ENCODE measurements at regions of chr1 and their contacts with region 1.

Region 1: DNA sequence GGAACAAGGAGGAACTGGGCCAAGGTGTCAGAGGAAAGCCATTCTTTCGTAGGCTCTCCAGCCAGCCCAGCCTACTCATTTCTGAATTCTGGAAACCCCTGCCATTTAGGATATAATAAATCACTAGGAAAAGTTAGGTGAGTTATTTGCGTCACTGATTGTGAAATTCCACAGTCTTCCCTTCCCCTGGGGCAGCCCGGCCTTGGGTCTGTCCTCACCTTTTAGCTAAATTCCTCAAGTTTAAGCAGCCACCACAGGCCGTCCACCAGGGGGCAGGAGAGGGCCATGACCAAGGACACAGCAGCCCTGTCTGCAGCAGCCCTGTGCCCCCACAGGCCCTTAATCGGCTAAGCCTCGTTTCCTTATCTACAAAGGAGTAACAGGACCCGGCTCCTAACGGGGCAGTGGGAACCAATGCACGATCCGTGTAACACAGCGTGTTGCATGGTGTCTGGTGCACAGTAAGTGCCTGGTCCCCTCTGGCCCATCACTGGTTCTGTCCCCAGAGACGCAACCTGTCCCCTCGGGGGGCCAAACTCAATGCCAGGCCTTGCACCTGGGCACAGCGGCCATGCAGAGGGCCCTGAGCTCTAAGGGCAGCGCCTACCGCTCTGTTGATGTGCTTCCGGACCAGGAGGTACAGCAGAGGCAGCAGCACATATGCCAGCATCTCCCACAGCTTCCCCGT is 18.1 kb downstream of the GPR157 start:
- DNase-seq: peak; percentile 91
- H3K4me3 ChIP-seq: no peak overlapping the region
- H3K27ac ChIP-seq: peak overlapping the region; percentile 16; the same call in 1 of the 2 replicates
- H3K4me1 ChIP-seq: peaks cover 8% of the 10 kb centered on the region
- H3K27me3 ChIP-seq: no peaks in the 10 kb centered on the region
- CTCF ChIP-seq: peak; percentile 90

Region 2: GRCh38 chr1:8422510-8423301 is 688.1 kb before region 1 on chr1:
- CTCF ChIA-PET with region 1: no interaction called
- POLR2A ChIA-PET with region 1: no interaction called
- intact Hi-C with region 1: no loop called
- DNase-seq: no peak
- H3K4me3 ChIP-seq: peak overlapping the region; percentile 70
- H3K27ac ChIP-seq: peak overlapping the region; percentile 65
- H3K4me1 ChIP-seq: peaks cover 36% of the 10 kb centered on the region
- H3K27me3 ChIP-seq: no peaks in the 10 kb centered on the region
- CTCF ChIP-seq: no peak

Region 3: GRCh38 chr1:9069326-9070100 is 41.3 kb before region 1 on chr1 and contains the start of gene SLC2A5:
- CTCF ChIA-PET with region 1: no interaction called
- POLR2A ChIA-PET with region 1: no interaction called
- intact Hi-C with region 1: no loop called
- DNase-seq: no peak
- H3K4me3 ChIP-seq: no peak within 1 kb of the TSS
- H3K27ac ChIP-seq: no peak within 1 kb of the TSS
- H3K4me1 ChIP-seq: no peaks in the 10 kb centered on the region
- H3K27me3 ChIP-seq: no peaks in the 10 kb centered on the region
- CTCF ChIP-seq: no peak
- total RNA-seq, gene SLC2A5: not detected in 2 replicates

Region 4: DNA sequence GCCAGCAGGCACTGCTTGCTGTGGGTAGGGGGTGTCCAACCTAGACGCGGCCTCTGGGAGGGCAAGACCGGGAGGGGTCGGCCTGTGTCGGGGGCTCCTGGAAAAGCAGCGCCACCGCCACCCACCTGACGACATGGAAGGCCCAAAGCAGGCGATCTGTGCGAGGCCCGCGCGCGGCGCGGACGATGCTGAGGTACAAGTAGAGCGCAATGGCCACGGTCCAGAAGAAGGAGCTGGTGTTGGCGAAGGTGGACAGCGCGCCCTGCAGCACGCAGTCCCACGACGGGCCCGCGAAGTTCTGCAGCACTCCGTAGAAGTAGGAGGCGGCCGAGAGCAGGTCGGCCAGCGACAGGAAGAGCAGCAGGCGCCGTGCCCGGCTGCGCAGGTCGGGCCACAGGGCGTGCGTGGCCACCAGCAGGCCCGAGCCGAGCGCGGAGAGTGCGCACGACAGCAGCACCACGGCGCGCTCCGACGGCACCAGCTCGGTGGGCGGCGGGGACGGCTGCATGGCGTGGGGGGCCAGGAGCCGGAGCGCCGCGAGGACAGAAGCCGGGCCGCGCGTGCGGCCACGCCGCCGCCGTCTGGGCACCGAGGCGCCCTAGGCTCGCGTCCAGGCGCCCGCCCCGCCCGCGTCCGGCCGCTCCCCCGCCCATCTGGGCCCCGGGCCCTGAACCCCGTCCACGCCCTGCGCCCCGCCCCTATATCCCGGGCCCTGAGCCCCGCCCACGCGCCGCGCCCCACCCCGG is 17.9 kb after region 1 on chr1 and contains the start of gene GPR157:
- CTCF ChIA-PET with region 1: interaction called, 18 read pairs
- POLR2A ChIA-PET with region 1: no interaction called
- intact Hi-C with region 1: no loop called
- DNase-seq: peak; percentile 52 to 78
- H3K4me3 ChIP-seq: peak within 1 kb of the TSS; percentile 70
- H3K27ac ChIP-seq: peak within 1 kb of the TSS; percentile 44; the same call in 1 of the 2 replicates
- H3K4me1 ChIP-seq: peaks cover 33% of the 10 kb centered on the region
- H3K27me3 ChIP-seq: no peaks in the 10 kb centered on the region
- CTCF ChIP-seq: no peak
- total RNA-seq, gene GPR157: 9.0 and 10.6 TPM in 2 replicates

Region 5: DNA sequence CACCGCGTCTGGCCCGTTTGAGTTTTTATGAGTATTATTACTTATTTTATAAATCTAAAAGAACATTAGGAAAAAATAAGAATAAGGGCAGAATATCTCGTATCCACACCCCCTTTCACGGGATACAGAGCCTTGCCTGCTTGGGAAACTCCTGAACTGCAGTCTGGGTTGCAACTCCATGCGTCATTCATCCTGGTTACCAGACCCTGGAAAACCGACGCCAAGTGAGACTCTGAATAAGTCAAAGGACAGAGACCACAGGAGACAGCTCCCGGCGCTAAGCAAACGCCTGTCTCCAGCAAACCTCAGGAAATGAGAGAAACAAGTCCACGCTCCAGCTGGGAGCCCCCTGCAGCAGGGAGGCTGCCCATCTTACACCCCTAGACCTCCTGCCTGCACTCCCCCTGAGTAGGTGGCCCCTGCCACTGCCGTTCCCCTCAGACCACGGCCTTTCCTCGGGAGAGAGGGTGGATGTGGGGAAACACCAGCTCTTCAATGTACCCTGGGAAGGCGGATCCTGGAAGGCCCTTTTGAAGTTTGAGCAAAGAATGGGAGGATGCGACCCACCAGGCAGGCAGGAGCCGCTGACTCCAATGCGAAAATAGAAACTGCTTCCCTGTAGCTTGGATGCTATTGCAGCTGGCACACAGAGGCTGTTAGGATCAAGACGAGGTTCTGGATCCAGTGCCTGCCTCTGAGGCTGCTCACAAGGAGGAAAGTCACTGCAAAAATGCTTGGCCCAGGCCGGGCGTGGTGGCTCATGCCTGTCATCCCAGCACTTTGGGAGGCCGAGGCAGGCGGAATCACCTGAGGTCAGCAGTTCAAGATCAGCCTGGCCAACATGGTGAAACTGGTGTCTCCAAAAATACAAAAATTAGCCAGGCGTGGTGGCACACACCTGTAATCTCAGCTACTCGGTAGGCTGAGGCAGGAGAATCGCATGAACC is 55.7 kb after region 1 on chr1:
- CTCF ChIA-PET with region 1: interaction called, 13 read pairs
- POLR2A ChIA-PET with region 1: interaction called, 8 read pairs
- intact Hi-C with region 1: no loop called
- DNase-seq: no peak
- H3K4me3 ChIP-seq: no peak overlapping the region
- H3K27ac ChIP-seq: no peak overlapping the region
- H3K4me1 ChIP-seq: peaks cover 40% of the 10 kb centered on the region
- H3K27me3 ChIP-seq: no peaks in the 10 kb centered on the region
- CTCF ChIP-seq: no peak

Region 6: GRCh38 chr1:9196129-9197040 is 85.6 kb after region 1 on chr1:
- CTCF ChIA-PET with region 1: interaction called, 5 read pairs
- POLR2A ChIA-PET with region 1: no interaction called
- intact Hi-C with region 1: loop called (anchors 1 kb)
- DNase-seq: peak; percentile 41 to 51
- H3K4me3 ChIP-seq: no peak overlapping the region
- H3K27ac ChIP-seq: no peak overlapping the region
- H3K4me1 ChIP-seq: peaks cover 14% of the 10 kb centered on the region
- H3K27me3 ChIP-seq: no peaks in the 10 kb centered on the region
- CTCF ChIP-seq: peak; percentile 76

Region 7: DNA sequence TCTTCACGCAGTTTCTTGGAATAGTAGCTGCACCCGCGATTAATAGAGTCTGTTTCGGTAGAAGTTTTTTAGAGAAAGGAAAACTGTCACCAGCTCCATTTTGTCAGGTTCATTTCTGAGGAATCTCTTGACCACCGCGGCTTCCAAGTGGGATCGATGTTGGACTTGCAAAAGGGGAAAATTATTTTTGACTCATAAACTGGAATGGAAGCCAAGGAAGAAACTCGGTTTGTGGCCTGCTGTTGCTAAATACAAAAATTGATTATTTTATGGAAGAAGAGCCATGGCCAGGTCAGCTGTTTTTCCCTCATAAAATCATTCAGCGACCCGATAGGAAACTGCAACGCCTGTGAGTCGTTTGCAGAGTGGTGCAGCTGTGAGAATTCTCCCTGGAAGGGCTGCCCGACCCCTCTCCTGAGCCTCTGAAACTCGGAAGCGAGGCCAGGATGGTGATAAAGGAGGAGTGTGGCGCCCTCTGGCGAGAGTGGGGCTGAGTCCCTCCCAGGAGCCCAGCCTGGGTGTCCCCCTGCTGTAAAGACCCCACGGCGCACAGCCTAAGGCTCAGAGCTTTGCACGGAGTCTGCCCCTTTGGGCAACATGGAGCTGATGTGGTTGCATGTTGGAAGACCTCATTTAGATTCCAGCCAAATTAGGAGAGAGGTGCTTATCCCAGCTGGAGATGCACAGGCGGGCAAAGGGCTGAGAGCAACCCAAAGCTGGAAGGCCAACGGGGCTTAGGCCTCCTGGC is 344.8 kb after region 1 on chr1:
- CTCF ChIA-PET with region 1: no interaction called
- POLR2A ChIA-PET with region 1: no interaction called
- intact Hi-C with region 1: loop called (anchors 10 kb)
- DNase-seq: peak in 1 of 2 experiments; percentile 34
- H3K4me3 ChIP-seq: no peak overlapping the region
- H3K27ac ChIP-seq: no peak overlapping the region
- H3K4me1 ChIP-seq: no peaks in the 10 kb centered on the region; the same call in 1 of the 2 replicates
- H3K27me3 ChIP-seq: no peaks in the 10 kb centered on the region
- CTCF ChIP-seq: peak; percentile 73

Measured in PC-9 (cell line).